ENCODE measurements at regions of chr19 and their contacts with region 1.

Region 1: GRCh38 chr19:2229103-2230028 is 6.8 kb downstream of the PLEKHJ1 start:
- DNase-seq: no peak
- H3K4me3 Mint-ChIP-seq: no peak overlapping the region
- H3K27ac Mint-ChIP-seq: no peak overlapping the region
- H3K4me1 Mint-ChIP-seq: peaks cover 9% of the 10 kb centered on the region
- H3K27me3 Mint-ChIP-seq: no peaks in the 10 kb centered on the region

Region 2: DNA sequence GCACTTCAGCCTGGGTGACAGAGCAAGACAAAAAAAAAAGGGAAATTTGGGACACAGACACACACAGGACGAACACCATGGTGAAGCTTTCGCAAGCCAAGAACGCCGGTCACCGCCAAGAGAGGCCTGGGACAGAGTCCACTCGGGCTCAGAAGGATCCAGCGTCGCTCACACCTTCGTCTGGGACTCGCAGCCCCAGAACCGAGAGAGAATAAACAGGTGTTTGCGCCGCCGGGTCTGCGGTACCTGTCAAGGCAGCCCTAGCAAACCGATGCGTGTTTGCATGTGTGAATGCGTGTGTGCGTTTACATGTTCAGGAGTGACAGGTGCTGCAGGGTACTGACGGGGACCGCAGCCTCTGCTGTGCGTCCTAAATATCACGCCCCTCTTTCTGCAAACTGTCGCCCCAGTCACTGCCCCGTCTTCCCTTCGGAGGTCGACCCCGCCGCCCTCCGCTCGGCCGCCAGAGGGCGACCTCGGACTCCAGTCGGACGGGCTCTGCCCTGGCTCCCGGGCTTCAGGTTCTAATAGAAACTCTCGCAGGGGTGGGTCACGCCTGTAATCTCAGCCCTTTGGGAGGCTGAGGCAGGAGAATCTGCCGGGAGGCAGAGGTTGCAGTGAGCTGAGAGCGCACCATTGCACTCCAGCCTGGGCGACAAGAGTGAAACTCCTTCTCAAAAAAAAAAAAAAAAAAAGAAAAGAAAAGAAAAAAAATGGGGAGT is 300.2 kb before region 1 on chr19:
- CTCF ChIA-PET with region 1: no interaction called
- POLR2A ChIA-PET with region 1: interaction called, 14 read pairs
- DNase-seq: peak; percentile 83
- H3K4me3 Mint-ChIP-seq: peak overlapping the region; percentile 70
- H3K27ac Mint-ChIP-seq: peak overlapping the region; percentile 60
- H3K4me1 Mint-ChIP-seq: peaks cover 30% of the 10 kb centered on the region
- H3K27me3 Mint-ChIP-seq: peaks cover 3% of the 10 kb centered on the region

Region 3: DNA sequence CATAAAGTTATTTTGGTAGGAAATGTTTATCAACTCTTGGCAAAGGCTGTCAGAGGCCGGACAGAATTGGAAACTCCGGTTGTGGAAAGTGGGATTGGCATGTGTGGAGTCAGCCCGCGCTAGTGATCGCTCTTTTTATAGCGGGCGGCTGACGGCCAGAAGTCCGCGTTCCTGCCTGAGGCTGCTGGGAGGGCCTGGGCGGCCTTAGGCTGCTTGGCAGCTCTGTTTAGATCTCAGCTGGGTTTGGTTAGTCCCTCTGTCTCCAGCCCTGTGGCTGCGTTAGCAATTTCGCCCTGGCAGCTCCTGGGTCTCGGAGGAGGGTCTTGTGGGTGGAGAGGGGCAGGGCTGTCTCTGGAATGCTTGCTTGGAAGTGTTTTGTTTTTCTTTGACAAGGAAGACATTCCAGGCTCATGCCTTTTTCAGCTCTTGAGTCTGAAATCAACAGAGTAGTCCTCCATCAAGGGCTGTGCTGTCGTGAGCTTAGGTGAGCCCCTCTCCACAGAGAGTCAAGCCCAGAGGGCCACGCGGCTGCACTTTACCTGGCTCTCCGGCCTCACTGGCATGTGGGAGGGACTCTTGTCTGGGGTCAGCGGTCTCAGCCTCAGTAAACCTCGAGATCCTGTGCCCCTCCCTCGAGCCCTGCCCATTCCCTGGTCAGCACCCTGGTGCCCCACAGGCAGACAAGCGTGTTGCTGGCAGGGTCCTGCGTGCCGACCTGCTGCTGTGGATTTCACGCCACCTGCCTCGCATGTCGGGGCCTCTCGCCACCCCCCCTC is 43.1 kb before region 1 on chr19:
- CTCF ChIA-PET with region 1: no interaction called
- POLR2A ChIA-PET with region 1: no interaction called
- DNase-seq: no peak
- H3K4me3 Mint-ChIP-seq: no peak overlapping the region
- H3K27ac Mint-ChIP-seq: no peak overlapping the region
- H3K4me1 Mint-ChIP-seq: no peaks in the 10 kb centered on the region
- H3K27me3 Mint-ChIP-seq: no peaks in the 10 kb centered on the region

Measured in activated CD4-positive, alpha-beta T cell treated with anti-CD3 and anti-CD28 coated beads, Interleukin-2, amount 10 ng/mL, durations not matched to agents 7 days and 5 days (primary cell).